Calu3 (cell line): ENCODE measurements at regions of chr6 and their contacts with region 1.

Region 1: DNA sequence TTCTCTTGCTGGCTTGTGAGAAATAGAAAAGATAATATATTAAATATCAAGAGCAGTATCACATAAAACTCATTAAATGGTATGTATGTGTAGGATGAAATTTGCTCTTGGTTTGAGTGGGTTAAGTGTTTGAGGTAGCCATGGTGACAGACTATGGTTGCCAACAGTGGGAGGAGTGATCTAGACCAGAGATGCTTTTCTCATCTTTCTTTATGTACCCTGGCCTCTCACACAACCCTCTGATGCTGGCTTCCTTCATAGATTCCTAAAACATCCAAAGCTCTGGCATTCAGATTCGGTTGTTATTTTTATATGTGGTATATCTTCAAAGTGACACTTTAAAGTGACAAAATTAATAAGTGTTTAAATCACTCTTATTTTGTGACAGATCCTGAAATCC is 9.0 kb upstream of the MLIP start:
- DNase-seq: no peak
- H3K4me3 Mint-ChIP-seq: no peak overlapping the region
- H3K27ac Mint-ChIP-seq: no peak overlapping the region
- H3K4me1 Mint-ChIP-seq: no peaks in the 10 kb centered on the region
- H3K27me3 Mint-ChIP-seq: no peaks in the 10 kb centered on the region
- CTCF ChIP-seq: no peak

Region 2: GRCh38 chr6:53896237-53896636 is 206.0 kb before region 1 on chr6:
- CTCF ChIA-PET with region 1: no interaction called
- intact Hi-C with region 1: no loop called
- DNase-seq: no peak
- H3K4me3 Mint-ChIP-seq: no peak overlapping the region
- H3K27ac Mint-ChIP-seq: no peak overlapping the region
- H3K4me1 Mint-ChIP-seq: peaks cover 26% of the 10 kb centered on the region
- H3K27me3 Mint-ChIP-seq: no peaks in the 10 kb centered on the region
- CTCF ChIP-seq: no peak

Region 3: DNA sequence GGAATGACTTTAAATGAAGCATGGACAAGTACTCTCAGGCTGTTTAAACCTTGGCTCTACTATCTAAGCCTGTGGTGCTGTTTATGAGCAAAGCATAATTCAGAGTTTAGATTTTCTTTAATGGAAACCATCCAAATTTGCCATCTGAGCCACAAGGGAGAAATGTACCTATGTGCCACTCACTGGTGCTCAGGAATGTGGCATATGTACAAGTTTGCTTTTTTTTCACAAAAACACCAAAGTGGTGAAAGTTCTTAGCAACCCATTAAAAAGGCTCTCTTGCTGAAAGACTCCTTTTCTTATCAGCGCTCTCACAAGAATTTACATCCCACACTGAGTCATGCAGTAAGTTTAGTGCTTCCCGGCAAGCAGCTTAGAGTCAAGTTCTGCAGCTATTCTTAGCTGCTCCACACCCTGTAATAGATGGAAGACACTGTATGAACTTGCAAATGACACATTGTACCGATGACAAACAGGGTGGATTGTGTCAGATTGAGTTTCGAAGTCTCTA is 48.3 kb before region 1 on chr6:
- CTCF ChIA-PET with region 1: no interaction called
- intact Hi-C with region 1: loop called (anchors 1 kb)
- DNase-seq: peak; percentile 39
- H3K4me3 Mint-ChIP-seq: peak overlapping the region; percentile 19
- H3K27ac Mint-ChIP-seq: no peak overlapping the region
- H3K4me1 Mint-ChIP-seq: no peaks in the 10 kb centered on the region
- H3K27me3 Mint-ChIP-seq: no peaks in the 10 kb centered on the region
- CTCF ChIP-seq: no peak